ENCODE measurements at regions of chr11 and their contacts with region 1.

Region 1: DNA sequence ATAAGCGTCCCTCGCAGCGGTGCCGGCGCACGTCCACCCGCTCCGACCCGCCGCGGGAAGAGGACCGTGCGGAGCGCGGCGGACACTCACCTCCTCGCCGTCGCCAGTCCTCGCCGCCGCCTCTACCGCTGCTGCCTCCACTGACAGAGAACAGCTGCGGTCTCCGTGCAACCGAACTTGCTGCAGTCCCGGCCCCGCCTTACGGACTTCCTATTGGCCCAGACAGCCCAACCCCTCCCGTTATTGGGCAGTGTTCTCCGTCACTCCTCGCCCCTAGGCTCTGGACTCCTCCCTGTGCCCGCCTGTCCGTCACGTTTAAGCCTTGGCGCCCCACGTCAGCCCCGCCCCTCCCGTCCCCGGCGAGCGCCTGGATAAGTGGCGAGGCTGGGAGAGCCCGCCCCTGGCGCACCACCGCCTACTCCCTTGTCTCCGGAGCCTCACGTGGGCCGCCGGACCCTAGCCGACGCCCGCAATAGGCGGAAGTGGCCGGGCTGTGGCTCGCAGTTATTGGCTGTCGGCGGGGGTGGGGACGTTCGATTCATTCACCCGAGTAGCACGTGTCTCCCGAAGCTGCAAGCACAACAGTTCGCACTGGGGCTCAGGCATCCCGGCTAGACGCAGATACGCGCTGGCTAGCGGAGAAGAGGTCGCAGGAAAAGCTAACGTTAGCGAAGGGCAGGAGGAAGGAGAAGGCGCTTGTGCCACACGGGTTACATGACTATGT is at the start of gene PC:
- DNase-seq: peak; percentile 97 to 100
- H3K4me3 ChIP-seq: peak within 1 kb of the TSS; percentile 52 to 72 (median 61)
- H3K27ac ChIP-seq: peak within 1 kb of the TSS; percentile 56; the same call in 1 of the 2 replicates
- H3K4me1 ChIP-seq: peaks cover 3 to 16% (median 7%) of the 10 kb centered on the region in 4 experiments
- H3K27me3 ChIP-seq: peaks cover 0 to 6% (median 4%) of the 10 kb centered on the region in 4 experiments; a peak in 4 of 7 replicates
- CTCF ChIP-seq: 0 out of 4 replicates have a peak, but pooled peaks of 1 of the 3 experiments have one; percentile 1
- EP300 ChIP-seq: peak in 1 of 2 experiments; percentile 75; a peak in 1 of 3 replicates
- POLR2A ChIP-seq: peak in 1 of 2 experiments; percentile 56; a peak in 2 of 3 replicates
- RAD21 ChIP-seq: no peak
- total RNA-seq, gene PC: 27.2 and 27.5 TPM in 2 replicates

Region 2: DNA sequence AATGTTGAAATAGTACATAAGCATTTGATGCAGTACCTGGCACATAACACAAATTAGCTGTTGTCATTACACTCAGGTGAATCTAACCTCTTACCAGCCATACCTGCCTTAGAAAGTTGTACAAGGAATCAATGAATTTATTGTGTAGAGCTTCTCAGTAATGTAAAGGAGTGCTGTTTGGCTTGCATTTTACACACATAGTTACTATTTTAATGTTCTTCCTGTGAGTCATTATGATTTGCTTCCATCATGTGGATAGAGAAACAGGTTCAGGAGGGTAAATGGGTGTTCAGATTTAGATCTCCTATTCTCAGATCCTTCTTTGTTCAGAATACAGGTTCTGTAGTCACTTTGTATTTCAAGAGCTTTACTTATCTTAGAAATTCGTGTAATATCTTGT is 142.7 kb before region 1 on chr11:
- CTCF ChIA-PET with region 1: no interaction called
- POLR2A ChIA-PET with region 1: no interaction called
- DNase-seq: no peak
- H3K4me3 ChIP-seq: no peak overlapping the region
- H3K27ac ChIP-seq: no peak overlapping the region
- H3K4me1 ChIP-seq: peaks cover 2 to 10% (median 5%) of the 10 kb centered on the region in 4 experiments; a peak in 6 of 7 replicates
- H3K27me3 ChIP-seq: no peaks in the 10 kb centered on the region
- CTCF ChIP-seq: no peak
- EP300 ChIP-seq: no peak
- POLR2A ChIP-seq: no peak
- RAD21 ChIP-seq: no peak

Region 3: GRCh38 chr11:66987158-66987620 is 28.8 kb after region 1 on chr11:
- CTCF ChIA-PET with region 1: interaction called, 3 read pairs
- POLR2A ChIA-PET with region 1: interaction called, 11 read pairs
- DNase-seq: peak in 1 of 2 experiments; percentile 73
- H3K4me3 ChIP-seq: no peak overlapping the region
- H3K27ac ChIP-seq: no peak overlapping the region
- H3K4me1 ChIP-seq: peaks cover 0 to 6% (median 5%) of the 10 kb centered on the region in 4 experiments; a peak in 6 of 7 replicates
- H3K27me3 ChIP-seq: no peaks in the 10 kb centered on the region
- CTCF ChIP-seq: no peak
- EP300 ChIP-seq: no peak
- POLR2A ChIP-seq: no peak
- RAD21 ChIP-seq: no peak

Measured in H1 (cell line).